Activated T-helper 1 cell treated with anti-CD3 and anti-CD28 coated beads, Interleukin-12 subunit alpha, Interleukin-12 subunit beta, Interleukin-2, Interleukin-4 antibody, amounts not matched to agents 30 ng/mL and 10 ng/mL and 1 ng/mL, durations not matched to agents 14 hours and 24 hours and 36 hours (primary cell): ENCODE measurements at regions of chr16 and their contacts with region 1.

Region 1: DNA sequence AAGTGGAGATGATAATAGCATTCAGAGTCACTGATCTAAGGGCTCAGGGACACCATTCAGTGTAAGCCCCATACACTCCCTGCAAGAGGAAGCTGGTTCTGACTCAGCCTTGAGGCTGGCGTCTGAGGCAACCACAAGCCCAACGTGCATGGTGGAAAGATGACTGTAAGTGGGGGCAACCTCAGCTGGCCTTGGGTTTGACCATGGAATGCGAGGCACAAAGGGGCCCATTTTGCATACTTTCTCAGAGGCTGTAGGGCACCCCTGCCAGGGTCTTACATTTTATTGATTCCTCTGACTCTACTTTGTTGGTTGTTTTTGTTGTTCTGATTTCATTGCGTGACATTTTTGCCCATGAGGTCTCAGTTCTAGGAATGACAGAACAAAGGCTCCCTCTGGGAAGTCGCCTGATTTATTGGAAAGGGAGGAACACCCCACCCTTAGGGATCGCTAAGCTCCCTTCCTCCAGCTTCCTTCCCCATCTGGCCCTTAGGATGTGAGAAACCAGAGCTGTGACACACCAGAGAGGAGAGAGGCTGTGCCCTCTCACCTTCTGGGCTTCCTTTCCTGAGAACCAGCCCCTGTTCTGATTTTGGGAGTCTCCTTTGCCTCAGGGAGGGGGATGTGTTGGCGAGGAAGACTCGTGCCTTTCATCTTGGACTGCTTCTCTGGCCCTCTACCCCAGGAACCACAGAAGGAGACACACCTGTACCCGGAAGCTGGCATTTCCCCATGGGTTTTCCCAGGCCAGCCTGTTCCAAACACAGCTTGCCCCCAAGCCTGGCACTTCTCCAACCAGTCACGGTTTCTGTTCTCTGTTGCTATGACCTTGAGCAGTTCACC is 5.6 kb upstream of the CIITA start:
- DNase-seq: peak; percentile 63
- H3K4me3 Mint-ChIP-seq: peak overlapping the region; percentile 57
- H3K27ac Mint-ChIP-seq: peak overlapping the region; percentile 82
- H3K4me1 Mint-ChIP-seq: peaks cover 86% of the 10 kb centered on the region
- H3K27me3 Mint-ChIP-seq: peaks cover 13% of the 10 kb centered on the region

Region 2: DNA sequence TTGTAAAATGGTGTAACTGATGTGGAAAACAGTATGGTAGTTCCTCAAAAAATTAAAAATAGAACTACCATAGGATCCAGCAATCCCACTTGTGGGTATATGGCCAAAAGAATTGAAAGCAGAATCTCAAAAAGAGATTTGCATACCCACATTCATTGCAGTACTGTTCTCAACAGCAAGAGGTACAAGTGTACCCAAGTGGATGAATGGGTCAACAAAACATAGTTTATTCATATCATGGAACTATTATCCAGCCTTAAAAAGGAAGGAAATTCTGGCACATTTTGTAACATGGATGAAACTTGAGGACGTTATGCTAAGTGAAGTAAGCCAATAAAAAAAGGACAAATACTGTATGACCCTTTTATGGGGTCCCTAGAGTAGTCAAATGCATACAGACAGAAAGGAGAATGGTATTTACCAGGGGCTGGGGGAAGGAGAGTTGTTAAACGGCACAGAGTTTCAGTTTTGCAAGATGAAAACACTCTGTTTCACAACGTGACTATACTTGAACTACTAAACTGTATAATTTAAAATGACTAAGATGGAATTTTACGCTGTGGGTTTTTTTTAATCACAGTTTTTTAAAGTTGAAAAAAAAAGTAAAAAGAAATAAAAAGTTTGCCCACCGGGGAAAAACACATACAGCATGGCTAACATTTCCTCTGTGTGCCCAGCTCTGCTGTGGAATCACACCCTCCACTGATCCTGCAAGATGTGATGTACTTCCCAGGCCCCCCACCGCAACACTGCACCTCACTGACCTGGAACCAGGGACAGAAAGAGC is 58.9 kb before region 1 on chr16:
- intact Hi-C with region 1: loop called (anchors 1 kb)
- DNase-seq: no peak
- H3K4me3 Mint-ChIP-seq: peak overlapping the region; percentile 66
- H3K27ac Mint-ChIP-seq: peak overlapping the region; percentile 67
- H3K4me1 Mint-ChIP-seq: peaks cover 20% of the 10 kb centered on the region
- H3K27me3 Mint-ChIP-seq: peaks cover 3% of the 10 kb centered on the region

Region 3: DNA sequence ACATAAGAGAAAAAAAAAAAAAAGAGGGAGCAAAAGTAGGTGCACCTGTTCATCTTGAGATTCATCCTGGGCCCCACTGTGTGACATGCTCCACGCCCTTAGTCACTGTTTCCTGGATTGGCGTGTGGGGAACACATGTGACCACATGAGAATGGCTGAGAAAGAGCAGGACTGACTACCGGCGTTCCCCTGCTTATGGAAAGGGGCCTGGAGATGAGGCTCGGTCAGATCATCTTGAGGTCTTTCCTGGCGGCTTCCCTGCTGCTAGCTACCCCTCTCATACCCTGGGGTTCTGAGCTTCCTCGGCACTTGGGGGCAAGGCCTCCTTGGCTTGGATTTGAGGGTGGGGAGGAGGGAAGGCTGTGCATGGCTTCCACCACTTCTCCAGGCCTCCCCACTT is 67.0 kb after region 1 on chr16:
- intact Hi-C with region 1: loop called (anchors 2 kb)
- DNase-seq: peak; percentile 32
- H3K4me3 Mint-ChIP-seq: peak overlapping the region; percentile 97
- H3K27ac Mint-ChIP-seq: peak overlapping the region; percentile 57
- H3K4me1 Mint-ChIP-seq: peaks cover 58% of the 10 kb centered on the region
- H3K27me3 Mint-ChIP-seq: no peaks in the 10 kb centered on the region

Region 4: DNA sequence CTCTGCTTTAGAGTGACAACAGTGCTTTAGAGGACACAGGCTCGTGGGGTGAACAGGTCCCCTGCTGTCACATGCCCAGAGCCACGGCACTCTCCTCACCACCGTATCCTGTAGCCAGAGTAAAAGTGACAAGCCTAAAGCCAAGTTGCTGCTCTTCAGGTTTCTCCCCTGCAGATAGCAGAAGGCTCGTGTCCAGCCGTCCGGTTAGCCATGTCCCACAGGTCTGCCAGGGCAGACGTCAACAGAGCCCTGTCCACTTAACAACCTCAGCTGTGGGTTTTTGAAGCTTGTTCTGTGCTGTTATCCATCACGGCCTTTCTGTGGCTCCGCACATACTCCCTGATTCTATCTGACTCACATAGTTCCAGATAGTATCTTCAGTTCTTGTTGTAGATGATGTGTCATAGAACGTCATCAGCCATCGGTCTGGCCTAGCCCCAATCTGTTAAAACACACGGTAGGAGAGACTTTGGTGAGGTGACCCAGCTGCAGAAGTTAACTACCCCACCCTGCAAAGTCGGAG is 284.0 kb after region 1 on chr16:
- intact Hi-C with region 1: no loop called
- DNase-seq: no peak
- H3K4me3 Mint-ChIP-seq: no peak overlapping the region
- H3K27ac Mint-ChIP-seq: no peak overlapping the region
- H3K4me1 Mint-ChIP-seq: peaks cover 52% of the 10 kb centered on the region
- H3K27me3 Mint-ChIP-seq: no peaks in the 10 kb centered on the region